Activated T-helper 1 cell treated with anti-CD3 and anti-CD28 coated beads, Interleukin-12 subunit alpha, Interleukin-12 subunit beta, Interleukin-2, Interleukin-4 antibody, amounts not matched to agents 30 ng/mL and 10 ng/mL and 1 ng/mL, durations not matched to agents 14 hours and 24 hours and 36 hours (primary cell): ENCODE measurements at regions of chr5 and their contacts with region 1.

Region 1: GRCh38 chr5:111092062-111092853 is at the start of gene WDR36:
- DNase-seq: peak; percentile 83
- H3K4me3 Mint-ChIP-seq: peak within 1 kb of the TSS; percentile 98
- H3K27ac Mint-ChIP-seq: peak within 1 kb of the TSS; percentile 97
- H3K4me1 Mint-ChIP-seq: peaks cover 42% of the 10 kb centered on the region
- H3K27me3 Mint-ChIP-seq: peaks cover 2% of the 10 kb centered on the region
- total RNA-seq, gene WDR36: 82.5 and 85.7 TPM in 2 replicates

Region 2: GRCh38 chr5:110751902-110752762 is 340.1 kb before region 1 on chr5:
- intact Hi-C with region 1: loop called (anchors 1 kb)
- DNase-seq: peak; percentile 52
- H3K4me3 Mint-ChIP-seq: peak overlapping the region; percentile 64
- H3K27ac Mint-ChIP-seq: peak overlapping the region; percentile 92
- H3K4me1 Mint-ChIP-seq: peaks cover 60% of the 10 kb centered on the region
- H3K27me3 Mint-ChIP-seq: no peaks in the 10 kb centered on the region

Region 3: GRCh38 chr5:111072949-111073682 is 19.1 kb before region 1 on chr5:
- intact Hi-C with region 1: loop called (anchors 1 kb)
- DNase-seq: peak; percentile 50
- H3K4me3 Mint-ChIP-seq: peak overlapping the region; percentile 86
- H3K27ac Mint-ChIP-seq: peak overlapping the region; percentile 12
- H3K4me1 Mint-ChIP-seq: peaks cover 31% of the 10 kb centered on the region
- H3K27me3 Mint-ChIP-seq: peaks cover 58% of the 10 kb centered on the region

Region 4: DNA sequence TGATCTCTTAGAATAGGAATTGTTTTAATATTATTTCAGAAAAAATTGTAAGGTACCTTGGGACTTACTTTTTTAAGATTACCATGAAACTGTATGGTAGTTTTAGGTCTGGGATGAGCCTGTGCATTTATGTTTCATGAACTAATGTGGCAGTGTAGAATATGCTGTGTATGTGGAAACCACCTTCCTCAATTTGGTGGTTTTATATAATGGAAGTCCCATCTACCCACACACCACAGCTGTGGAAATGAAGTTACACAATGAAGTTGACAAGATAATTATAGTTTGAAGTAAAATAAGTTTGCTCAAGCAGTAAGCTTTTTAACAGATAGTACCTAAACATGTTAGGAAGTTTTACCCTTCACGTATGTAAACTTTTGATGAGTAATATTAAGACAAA is 24.3 kb after region 1 on chr5:
- intact Hi-C with region 1: loop called (anchors 2 kb)
- DNase-seq: no peak
- H3K4me3 Mint-ChIP-seq: no peak overlapping the region
- H3K27ac Mint-ChIP-seq: no peak overlapping the region
- H3K4me1 Mint-ChIP-seq: peaks cover 19% of the 10 kb centered on the region
- H3K27me3 Mint-ChIP-seq: no peaks in the 10 kb centered on the region

Region 5: DNA sequence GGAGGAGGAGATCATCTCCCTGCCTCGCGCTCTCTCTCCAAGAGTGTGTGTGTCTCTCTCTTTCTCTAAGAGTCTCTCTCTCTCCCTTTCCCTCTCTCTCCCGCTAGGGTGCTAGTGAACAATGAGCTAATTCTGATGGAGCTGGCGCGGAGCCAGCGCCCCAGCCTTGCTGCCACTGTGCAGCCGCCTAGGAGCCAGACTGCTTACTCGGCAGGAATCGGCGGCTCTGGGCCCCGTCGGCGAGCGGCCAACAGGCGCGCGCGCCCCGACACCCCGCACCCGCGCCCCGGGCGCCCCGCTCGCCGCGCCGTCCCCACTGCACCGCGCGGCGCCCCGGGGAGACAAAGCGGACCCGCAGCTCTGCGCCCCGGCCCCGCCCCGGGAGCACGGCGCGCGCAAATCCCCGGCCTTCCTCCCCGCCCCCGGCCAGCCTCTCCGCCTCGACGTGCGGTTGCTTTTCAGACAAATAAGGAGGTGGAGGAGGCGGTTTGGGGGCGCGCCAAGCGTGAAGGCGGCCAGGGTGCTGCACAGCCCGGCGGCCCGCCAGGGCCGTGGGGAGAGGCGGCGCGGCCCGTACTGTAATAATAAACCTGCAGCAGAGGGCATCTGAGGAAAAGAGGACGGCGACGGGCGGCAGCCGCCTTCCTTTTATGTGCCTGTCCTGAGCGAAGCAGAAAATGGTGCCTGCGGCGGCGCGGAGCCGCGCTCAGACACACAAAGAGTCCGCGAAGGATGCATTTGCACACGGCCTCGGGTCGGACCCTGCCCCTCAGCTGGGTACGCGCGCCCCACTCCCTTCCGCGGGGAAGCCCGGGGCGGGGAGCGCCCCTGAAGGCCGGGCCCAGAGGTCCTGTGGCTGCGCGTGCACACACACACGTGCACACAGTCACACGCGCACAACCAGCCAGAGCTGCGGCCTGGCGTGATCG is 665.4 kb after region 1 on chr5:
- intact Hi-C with region 1: loop called (anchors 10 kb)
- DNase-seq: peak; percentile 84
- H3K4me3 Mint-ChIP-seq: peak overlapping the region; percentile 87
- H3K27ac Mint-ChIP-seq: peak overlapping the region; percentile 86
- H3K4me1 Mint-ChIP-seq: peaks cover 29% of the 10 kb centered on the region
- H3K27me3 Mint-ChIP-seq: peaks cover 4% of the 10 kb centered on the region

Region 6: DNA sequence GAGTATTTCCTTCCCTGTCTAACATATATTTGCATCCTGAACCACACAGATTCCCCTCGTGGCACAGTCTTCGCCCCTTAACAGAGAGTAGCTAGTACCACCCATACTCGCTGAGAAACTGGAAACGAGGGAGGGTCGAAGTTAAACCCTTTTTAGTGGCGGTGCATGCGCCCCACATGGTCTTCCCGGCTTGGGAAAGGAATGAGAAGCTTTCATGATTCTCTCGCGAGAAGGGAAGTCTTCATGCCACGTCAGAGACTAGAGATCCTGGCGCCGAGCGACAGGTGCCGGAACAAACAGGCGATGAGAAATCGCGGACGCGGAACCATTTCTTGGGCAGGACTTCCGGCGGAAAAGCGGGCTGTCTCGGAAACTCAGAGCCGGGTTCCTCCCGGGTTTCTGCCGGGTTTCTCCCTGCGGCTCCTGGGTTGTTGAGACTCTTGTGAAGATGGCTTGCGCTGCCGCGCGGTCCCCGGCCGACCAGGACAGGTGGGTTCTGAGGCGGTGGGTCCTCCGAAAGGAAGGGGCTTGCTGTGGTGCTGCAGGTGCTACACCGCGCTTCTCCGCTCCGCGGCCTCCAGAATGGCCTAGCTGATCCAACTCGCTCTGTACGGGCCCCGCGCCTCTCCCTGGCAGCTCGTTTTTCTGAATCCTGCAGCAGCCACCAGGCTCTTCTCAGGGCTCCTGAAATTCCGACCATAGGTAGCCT is 1768.8 kb after region 1 on chr5 and contains the start of gene SRP19:
- intact Hi-C with region 1: loop called (anchors 10 kb)
- DNase-seq: peak; percentile 89
- H3K4me3 Mint-ChIP-seq: peak within 1 kb of the TSS; percentile 97
- H3K27ac Mint-ChIP-seq: peak within 1 kb of the TSS; percentile 96
- H3K4me1 Mint-ChIP-seq: peaks cover 27% of the 10 kb centered on the region
- H3K27me3 Mint-ChIP-seq: peaks cover 12% of the 10 kb centered on the region
- total RNA-seq, gene SRP19: 72.0 and 72.5 TPM in 2 replicates